IMR-90 (cell line): ENCODE measurements at regions of chr7 and their contacts with region 1.

Region 1: GRCh38 chr7:114988755-114989375 is 67.0 kb downstream of the MDFIC start:
- DNase-seq: peak; percentile 83
- ATAC-seq: peak; percentile 67
- H3K4me3 ChIP-seq: no peak overlapping the region
- H3K27ac ChIP-seq: no peak overlapping the region
- H3K4me1 ChIP-seq: peaks cover 4% of the 10 kb centered on the region; the same call in 1 of the 2 replicates
- H3K27me3 ChIP-seq: no peaks in the 10 kb centered on the region
- CTCF ChIP-seq: no peak
- POLR2A ChIP-seq: no peak
- RAD21 ChIP-seq: no peak

Region 2: GRCh38 chr7:115047968-115048720 is 59.3 kb after region 1 on chr7:
- CTCF ChIA-PET with region 1: no interaction called
- POLR2A ChIA-PET with region 1: no interaction called
- dilution Hi-C with region 1: no loop called
- in situ Hi-C with region 1: no loop called
- intact Hi-C with region 1: loop called (anchors 10 kb)
- DNase-seq: peak; percentile 80
- ATAC-seq: peak; percentile 78
- H3K4me3 ChIP-seq: no peak overlapping the region
- H3K27ac ChIP-seq: no peak overlapping the region
- H3K4me1 ChIP-seq: peaks cover 2% of the 10 kb centered on the region; the same call in 1 of the 2 replicates
- H3K27me3 ChIP-seq: no peaks in the 10 kb centered on the region
- CTCF ChIP-seq: no peak
- POLR2A ChIP-seq: no peak
- RAD21 ChIP-seq: no peak

Region 3: DNA sequence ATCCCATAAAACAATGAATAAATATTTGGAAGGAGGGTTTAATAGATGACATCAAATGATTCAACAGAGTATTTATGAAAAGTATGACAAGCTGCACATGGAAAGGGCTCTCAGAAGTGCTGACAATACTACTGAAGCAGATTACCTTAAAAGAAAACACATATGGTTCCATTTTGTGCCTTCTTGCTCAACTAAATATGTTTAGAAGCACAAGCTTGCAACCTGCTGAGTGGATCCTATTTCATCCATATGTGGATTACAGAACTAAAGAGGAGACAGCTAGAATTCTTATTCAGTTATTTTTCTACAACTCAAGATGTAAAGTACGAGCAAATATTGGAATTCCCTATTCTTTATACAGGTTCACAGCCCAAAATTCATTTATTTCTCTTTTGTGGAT is 701.1 kb after region 1 on chr7:
- CTCF ChIA-PET with region 1: no interaction called
- POLR2A ChIA-PET with region 1: no interaction called
- dilution Hi-C with region 1: no loop called
- in situ Hi-C with region 1: no loop called
- intact Hi-C with region 1: no loop called
- DNase-seq: peak; percentile 48
- ATAC-seq: no peak
- H3K4me3 ChIP-seq: no peak overlapping the region
- H3K27ac ChIP-seq: no peak overlapping the region
- H3K4me1 ChIP-seq: no peaks in the 10 kb centered on the region
- H3K27me3 ChIP-seq: no peaks in the 10 kb centered on the region
- CTCF ChIP-seq: no peak
- POLR2A ChIP-seq: no peak
- RAD21 ChIP-seq: no peak